Heart left ventricle (tissue), 16 donors: ENCODE measurements at regions of chr1 and their contacts with region 1.

Region 1: GRCh38 chr1:246681900-246682299 is 42.3 kb upstream of the SCCPDH start:
- DNase-seq: peak; percentile 70 to 85 (median 74)
- ATAC-seq: peak; percentile 43 to 80 (median 72)
- H3K4me3 ChIP-seq: no peak overlapping the region
- H3K27ac ChIP-seq: peak overlapping the region; percentile 25 to 86 (median 67)
- H3K4me1 ChIP-seq: peaks cover 0 to 41% (median 16%) of the 10 kb centered on the region in 12 donors
- H3K27me3 ChIP-seq: no peaks in the 10 kb centered on the region
- CTCF ChIP-seq: no peak
- POLR2A ChIP-seq: no peak

Region 2: GRCh38 chr1:246647113-246647512 is 34.8 kb before region 1 on chr1:
- intact Hi-C with region 1: loop called in 3 of 10 experiments (anchors 5 kb)
- DNase-seq: peak; percentile 73 to 84 (median 74)
- ATAC-seq: peak; percentile 84 to 97 (median 96)
- H3K4me3 ChIP-seq: peak overlapping the region in 10 of 12 donors; percentile 9 to 58 (median 46)
- H3K27ac ChIP-seq: peak overlapping the region in 11 of 12 donors; percentile 35 to 77 (median 58)
- H3K4me1 ChIP-seq: peaks cover 0 to 24% (median 1%) of the 10 kb centered on the region in 12 donors
- H3K27me3 ChIP-seq: no peaks in the 10 kb centered on the region
- CTCF ChIP-seq: peak; percentile 38 to 79 (median 64)
- POLR2A ChIP-seq: no peak

Region 3: DNA sequence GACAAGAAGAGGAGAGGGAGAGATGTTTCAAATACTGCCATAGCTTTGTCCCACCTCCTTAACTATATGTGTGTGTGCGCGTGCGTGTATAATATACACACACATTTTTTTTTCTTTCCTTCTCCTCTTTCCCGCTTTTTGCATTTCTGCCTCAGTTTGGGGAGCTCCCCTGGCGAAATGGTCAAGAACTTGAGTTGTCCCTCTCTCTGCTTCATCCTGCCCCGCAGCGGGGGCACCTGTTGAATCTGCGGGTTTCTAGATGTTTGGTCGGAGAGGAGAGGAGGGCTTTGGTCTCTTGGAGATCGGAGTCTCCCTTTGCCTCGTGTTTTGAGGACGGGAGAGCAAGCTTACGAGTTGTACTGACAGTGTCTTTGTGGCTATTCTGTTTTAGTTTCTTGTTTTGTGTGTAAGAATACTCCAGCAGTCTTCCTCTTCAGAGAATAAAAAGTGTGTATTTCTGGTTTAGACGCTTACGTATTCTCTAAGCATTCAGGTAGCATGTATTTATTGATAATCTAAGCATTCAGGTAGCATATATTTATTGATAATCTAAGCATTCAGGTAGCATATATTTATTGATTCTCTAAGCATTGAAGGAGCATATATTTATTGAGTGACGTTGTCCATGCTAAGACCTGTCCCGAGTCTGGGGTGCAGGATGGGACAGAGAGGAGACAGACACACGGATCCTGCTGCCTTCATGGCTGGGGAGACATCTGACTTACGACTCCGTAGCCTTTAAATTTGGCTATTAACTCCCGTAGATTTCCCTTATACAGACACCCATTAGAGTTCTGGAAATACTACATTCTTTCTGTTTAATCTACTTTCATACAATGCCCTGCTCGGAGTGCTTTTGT is 43.1 kb after region 1 on chr1:
- intact Hi-C with region 1: loop called in 1 of 10 experiments (anchors 5 kb)
- DNase-seq: peak in 1 of 5 donors; percentile 28
- ATAC-seq: peak in 1 of 4 donors; percentile 37
- H3K4me3 ChIP-seq: peak overlapping the region; percentile 65 to 97 (median 92)
- H3K27ac ChIP-seq: peak overlapping the region; percentile 56 to 93 (median 90)
- H3K4me1 ChIP-seq: peaks cover 0 to 32% (median 5%) of the 10 kb centered on the region in 12 donors
- H3K27me3 ChIP-seq: no peaks in the 10 kb centered on the region
- CTCF ChIP-seq: no peak
- POLR2A ChIP-seq: no peak

Region 4: DNA sequence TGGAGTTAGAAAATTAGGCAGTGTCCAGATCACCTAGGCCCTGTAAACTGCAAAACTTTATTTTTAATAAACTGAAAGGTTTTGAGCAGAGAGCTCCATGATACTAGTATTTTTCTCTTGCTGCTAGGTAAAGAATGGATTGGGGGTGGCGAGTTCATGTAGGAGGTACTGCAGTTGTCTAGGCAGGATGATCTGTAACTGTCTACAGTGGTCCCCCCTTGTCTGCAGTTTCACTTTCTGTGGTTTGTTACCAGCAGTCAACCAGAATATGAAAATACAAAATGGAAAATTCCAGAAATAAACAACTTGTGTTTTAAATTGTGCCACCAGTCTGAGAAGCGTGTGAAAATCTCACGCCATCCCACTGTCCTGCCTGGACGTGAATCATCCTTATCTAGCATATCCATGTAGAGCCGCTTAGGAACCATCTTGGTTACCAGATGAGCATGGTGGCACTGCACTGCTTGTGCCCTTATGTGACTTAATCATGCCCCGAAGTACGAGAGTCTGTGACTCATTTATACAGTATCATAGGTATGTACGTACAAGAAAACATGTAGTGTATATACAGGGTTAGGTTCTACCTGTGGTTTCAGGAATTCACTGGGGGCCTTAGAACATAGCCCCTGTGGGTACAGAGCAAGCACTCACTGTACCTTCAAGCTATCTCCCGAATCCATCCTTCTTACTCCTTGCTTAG is 155.7 kb after region 1 on chr1:
- intact Hi-C with region 1: no loop called
- DNase-seq: no peak
- ATAC-seq: peak in 2 of 4 donors; percentile 35 to 51
- H3K4me3 ChIP-seq: no peak overlapping the region
- H3K27ac ChIP-seq: no peak overlapping the region
- H3K4me1 ChIP-seq: peaks cover 0 to 9% (median 0%) of the 10 kb centered on the region in 12 donors
- H3K27me3 ChIP-seq: no peaks in the 10 kb centered on the region
- CTCF ChIP-seq: no peak
- POLR2A ChIP-seq: no peak